ENCODE measurements at regions of chr4 and their contacts with region 1.

Region 1: DNA sequence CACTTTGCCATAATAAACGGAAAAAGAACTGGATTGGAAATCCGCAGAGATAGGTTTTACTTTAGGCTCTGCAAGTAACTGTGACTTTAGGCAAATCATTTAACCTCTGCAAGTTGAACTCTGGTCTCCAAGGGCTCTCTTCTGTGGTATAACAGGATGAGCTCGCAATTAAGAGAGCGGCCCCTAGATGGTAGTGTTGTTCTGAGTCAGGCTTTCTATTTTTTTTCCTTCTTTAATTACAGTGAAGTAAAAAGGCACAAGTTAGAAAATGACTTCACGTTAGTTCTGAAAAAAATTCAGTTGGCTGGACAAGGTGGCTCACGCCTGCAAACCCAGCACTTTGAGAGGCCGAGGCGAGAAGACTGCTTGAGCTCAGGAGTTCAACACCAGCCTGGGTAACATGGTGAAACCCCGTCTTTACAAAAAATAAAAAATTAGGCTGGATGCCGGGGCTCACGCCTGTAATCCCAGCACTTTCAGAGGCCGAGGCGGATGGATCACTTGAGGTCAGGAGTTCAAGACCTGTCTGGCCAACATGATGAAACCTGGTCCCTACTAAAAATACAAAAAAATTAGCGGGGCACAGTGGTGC is 18.0 kb downstream of the RPS3A start:
- DNase-seq: peak; percentile 59 to 84 (median 76)
- H3K4me3 ChIP-seq: no peak overlapping the region
- H3K27ac ChIP-seq: no peak overlapping the region
- H3K4me1 ChIP-seq: no peaks in the 10 kb centered on the region
- H3K27me3 ChIP-seq: no peaks in the 10 kb centered on the region

Region 2: GRCh38 chr4:151105454-151106032 is 11.9 kb before region 1 on chr4:
- CTCF ChIA-PET with region 1: interaction called, 24 read pairs
- POLR2A ChIA-PET with region 1: no interaction called
- DNase-seq: no peak
- H3K4me3 ChIP-seq: no peak overlapping the region
- H3K27ac ChIP-seq: peak overlapping the region in 1 of 2 experiments; percentile 14
- H3K4me1 ChIP-seq: peaks cover 7 to 17% (median 13%) of the 10 kb centered on the region in 4 experiments
- H3K27me3 ChIP-seq: no peaks in the 10 kb centered on the region

Region 3: GRCh38 chr4:151129801-151130200 is 12.3 kb after region 1 on chr4:
- CTCF ChIA-PET with region 1: interaction called, 10 read pairs
- POLR2A ChIA-PET with region 1: no interaction called
- DNase-seq: no peak
- H3K4me3 ChIP-seq: no peak overlapping the region
- H3K27ac ChIP-seq: no peak overlapping the region
- H3K4me1 ChIP-seq: no peaks in the 10 kb centered on the region
- H3K27me3 ChIP-seq: no peaks in the 10 kb centered on the region

Region 4: GRCh38 chr4:151291485-151291884 is 174.0 kb after region 1 on chr4:
- CTCF ChIA-PET with region 1: no interaction called
- POLR2A ChIA-PET with region 1: no interaction called
- DNase-seq: no peak
- H3K4me3 ChIP-seq: no peak overlapping the region
- H3K27ac ChIP-seq: no peak overlapping the region
- H3K4me1 ChIP-seq: no peaks in the 10 kb centered on the region
- H3K27me3 ChIP-seq: no peaks in the 10 kb centered on the region

Measured in common myeloid progenitor, CD34-positive (primary cell).